Activated CD4-positive, alpha-beta T cell treated with anti-CD3 and anti-CD28 coated beads, Interleukin-2, amount 10 ng/mL, durations not matched to agents 24 days and 14 days (primary cell): ENCODE measurements at regions of chr1 and their contacts with region 1.

Region 1: GRCh38 chr1:246566128-246566812 is at the starts of genes CNST and TFB2M:
- DNase-seq: peak; percentile 98
- H3K4me3 Mint-ChIP-seq: peak within 1 kb of the TSS; percentile 100
- H3K27ac Mint-ChIP-seq: peak within 1 kb of the TSS; percentile 99
- H3K4me1 Mint-ChIP-seq: peaks cover 35% of the 10 kb centered on the region
- H3K27me3 Mint-ChIP-seq: no peaks in the 10 kb centered on the region
- total RNA-seq, gene CNST: 26.4 and 28.5 TPM in 2 replicates
- total RNA-seq, gene TFB2M: 24.3 and 26.5 TPM in 2 replicates

Region 2: GRCh38 chr1:244652699-244653466 is 1913.4 kb before region 1 on chr1 and contains the start of gene DESI2:
- intact Hi-C with region 1: loop called (anchors 2 kb)
- DNase-seq: peak; percentile 99
- H3K4me3 Mint-ChIP-seq: peak within 1 kb of the TSS; percentile 82
- H3K27ac Mint-ChIP-seq: peak within 1 kb of the TSS; percentile 84
- H3K4me1 Mint-ChIP-seq: peaks cover 23% of the 10 kb centered on the region
- H3K27me3 Mint-ChIP-seq: no peaks in the 10 kb centered on the region
- total RNA-seq, gene DESI2: 32.3 and 33.1 TPM in 2 replicates

Region 3: DNA sequence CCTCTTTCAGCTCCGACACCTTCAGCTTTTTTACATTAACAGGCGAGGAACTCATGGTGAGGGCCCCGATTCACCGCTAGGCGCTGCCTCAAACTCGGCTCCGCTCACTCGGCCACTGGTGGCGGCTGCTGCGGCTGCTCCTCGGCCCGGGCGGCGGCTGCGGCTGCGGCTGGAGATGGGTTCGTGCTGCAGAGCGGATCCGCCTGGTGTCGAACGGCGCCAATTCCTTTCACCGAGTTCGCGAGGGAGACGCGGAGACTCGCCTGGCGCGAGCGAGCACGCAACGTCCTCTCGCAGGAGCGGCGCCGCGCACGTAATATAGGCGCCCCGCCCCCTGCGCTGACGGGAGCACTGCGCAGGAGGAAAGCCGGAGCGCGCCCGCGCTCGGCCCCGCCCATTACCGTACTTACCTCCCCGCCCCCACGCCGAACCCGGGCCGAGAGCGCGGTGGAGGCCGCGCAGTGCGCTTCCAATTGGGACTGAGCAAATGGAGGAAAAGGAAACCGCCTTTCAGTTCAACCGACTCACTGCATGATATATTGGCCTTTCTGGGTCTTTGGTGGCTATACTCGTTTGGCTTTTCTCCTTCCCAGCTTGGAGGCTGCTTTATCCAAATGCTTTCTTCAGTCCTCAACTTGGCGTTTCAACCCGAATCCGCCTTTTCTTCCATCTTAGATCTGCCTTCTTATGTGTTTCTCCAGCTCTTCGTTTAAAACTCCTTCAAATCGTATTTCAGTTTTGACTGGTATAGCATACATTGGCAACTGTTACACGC is 1701.8 kb before region 1 on chr1 and contains the start of gene HNRNPU:
- intact Hi-C with region 1: loop called (anchors 2 kb)
- DNase-seq: peak; percentile 99
- H3K4me3 Mint-ChIP-seq: peak within 1 kb of the TSS; percentile 98
- H3K27ac Mint-ChIP-seq: peak within 1 kb of the TSS; percentile 98
- H3K4me1 Mint-ChIP-seq: peaks cover 34% of the 10 kb centered on the region
- H3K27me3 Mint-ChIP-seq: no peaks in the 10 kb centered on the region
- total RNA-seq, gene HNRNPU: 611 and 612 TPM in 2 replicates

Region 4: GRCh38 chr1:246506674-246507481 is 59.4 kb before region 1 on chr1 and contains the start of gene SMYD3:
- intact Hi-C with region 1: loop called (anchors 1 kb)
- DNase-seq: peak; percentile 93
- H3K4me3 Mint-ChIP-seq: peak within 1 kb of the TSS; percentile 93
- H3K27ac Mint-ChIP-seq: peak within 1 kb of the TSS; percentile 88
- H3K4me1 Mint-ChIP-seq: peaks cover 23% of the 10 kb centered on the region
- H3K27me3 Mint-ChIP-seq: no peaks in the 10 kb centered on the region
- total RNA-seq, gene SMYD3: 23.9 and 24.4 TPM in 2 replicates

Region 5: GRCh38 chr1:246602194-246602593 is 35.9 kb after region 1 on chr1:
- intact Hi-C with region 1: loop called (anchors 5 kb)
- DNase-seq: peak; percentile 65
- H3K4me3 Mint-ChIP-seq: no peak overlapping the region
- H3K27ac Mint-ChIP-seq: peak overlapping the region; percentile 9
- H3K4me1 Mint-ChIP-seq: peaks cover 18% of the 10 kb centered on the region
- H3K27me3 Mint-ChIP-seq: no peaks in the 10 kb centered on the region

Region 6: DNA sequence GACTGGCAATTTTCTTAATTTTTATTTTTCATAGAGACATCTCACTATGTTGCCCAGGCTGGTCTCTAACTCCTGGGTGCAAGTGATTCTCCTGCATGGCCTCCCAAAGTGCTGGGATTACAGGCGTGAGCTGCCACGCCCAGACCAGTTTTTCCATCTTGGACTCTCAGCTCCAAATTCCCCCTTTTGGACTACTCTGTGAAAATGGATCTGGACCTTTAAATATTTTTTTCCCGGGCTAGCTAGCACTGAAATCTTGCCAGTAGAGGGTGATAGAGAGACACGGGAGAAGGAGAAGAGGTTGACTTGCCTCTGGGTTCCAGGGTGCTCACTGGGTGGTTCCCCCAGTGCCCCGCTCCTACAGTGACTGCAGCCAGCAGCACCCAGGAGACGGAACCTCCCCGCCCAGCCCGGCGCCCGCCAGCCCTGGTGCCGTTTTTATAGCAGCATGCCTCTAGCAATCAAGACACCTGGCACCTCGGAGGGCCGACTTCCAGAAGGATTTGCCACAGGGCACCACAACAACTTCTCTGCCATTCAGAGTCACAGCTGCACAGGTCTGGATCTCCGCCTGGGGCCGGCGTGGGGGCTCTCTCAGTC is 123.2 kb after region 1 on chr1:
- intact Hi-C with region 1: no loop called
- DNase-seq: peak; percentile 81
- H3K4me3 Mint-ChIP-seq: no peak overlapping the region
- H3K27ac Mint-ChIP-seq: no peak overlapping the region
- H3K4me1 Mint-ChIP-seq: no peaks in the 10 kb centered on the region
- H3K27me3 Mint-ChIP-seq: peaks cover 2% of the 10 kb centered on the region

Region 7: DNA sequence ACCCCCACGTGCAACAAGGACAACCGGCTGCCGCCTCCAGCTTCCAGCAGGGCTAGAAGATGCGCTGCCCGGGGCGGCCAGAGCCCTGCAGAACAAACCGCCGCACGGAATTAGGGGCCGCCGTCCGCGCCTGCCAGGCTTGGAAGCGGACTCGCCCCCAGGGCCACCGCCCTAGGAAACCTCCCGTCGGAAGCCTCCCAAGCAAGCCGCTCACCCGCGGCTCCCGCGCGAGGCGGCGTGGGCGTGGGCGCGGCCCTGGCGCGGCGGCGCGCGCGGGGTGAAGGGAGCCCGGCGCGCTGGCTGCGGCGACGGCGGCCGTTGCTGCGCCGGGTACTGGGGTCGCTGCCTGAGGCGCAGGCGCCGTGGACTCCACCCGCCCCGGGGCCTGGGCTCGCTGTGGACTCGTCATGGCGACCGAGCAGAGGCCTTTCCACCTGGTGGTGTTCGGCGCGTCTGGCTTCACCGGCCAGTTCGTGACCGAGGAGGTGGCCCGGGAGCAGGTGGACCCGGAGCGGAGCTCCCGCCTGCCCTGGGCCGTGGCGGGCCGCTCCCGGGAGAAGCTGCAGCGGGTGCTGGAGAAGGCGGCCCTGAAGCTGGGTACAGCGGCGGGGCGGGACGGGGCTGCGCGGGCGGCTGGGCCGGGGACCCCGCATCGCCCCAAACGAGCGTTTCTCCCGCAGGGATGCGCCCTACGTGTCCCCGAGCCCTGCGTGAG is 157.9 kb after region 1 on chr1 and contains the start of gene SCCPDH:
- intact Hi-C with region 1: loop called (anchors 2 kb)
- DNase-seq: peak; percentile 91
- H3K4me3 Mint-ChIP-seq: peak within 1 kb of the TSS; percentile 91
- H3K27ac Mint-ChIP-seq: peak within 1 kb of the TSS; percentile 84
- H3K4me1 Mint-ChIP-seq: peaks cover 5% of the 10 kb centered on the region
- H3K27me3 Mint-ChIP-seq: no peaks in the 10 kb centered on the region
- total RNA-seq, gene SCCPDH: 31.7 and 32.3 TPM in 2 replicates

Region 8: DNA sequence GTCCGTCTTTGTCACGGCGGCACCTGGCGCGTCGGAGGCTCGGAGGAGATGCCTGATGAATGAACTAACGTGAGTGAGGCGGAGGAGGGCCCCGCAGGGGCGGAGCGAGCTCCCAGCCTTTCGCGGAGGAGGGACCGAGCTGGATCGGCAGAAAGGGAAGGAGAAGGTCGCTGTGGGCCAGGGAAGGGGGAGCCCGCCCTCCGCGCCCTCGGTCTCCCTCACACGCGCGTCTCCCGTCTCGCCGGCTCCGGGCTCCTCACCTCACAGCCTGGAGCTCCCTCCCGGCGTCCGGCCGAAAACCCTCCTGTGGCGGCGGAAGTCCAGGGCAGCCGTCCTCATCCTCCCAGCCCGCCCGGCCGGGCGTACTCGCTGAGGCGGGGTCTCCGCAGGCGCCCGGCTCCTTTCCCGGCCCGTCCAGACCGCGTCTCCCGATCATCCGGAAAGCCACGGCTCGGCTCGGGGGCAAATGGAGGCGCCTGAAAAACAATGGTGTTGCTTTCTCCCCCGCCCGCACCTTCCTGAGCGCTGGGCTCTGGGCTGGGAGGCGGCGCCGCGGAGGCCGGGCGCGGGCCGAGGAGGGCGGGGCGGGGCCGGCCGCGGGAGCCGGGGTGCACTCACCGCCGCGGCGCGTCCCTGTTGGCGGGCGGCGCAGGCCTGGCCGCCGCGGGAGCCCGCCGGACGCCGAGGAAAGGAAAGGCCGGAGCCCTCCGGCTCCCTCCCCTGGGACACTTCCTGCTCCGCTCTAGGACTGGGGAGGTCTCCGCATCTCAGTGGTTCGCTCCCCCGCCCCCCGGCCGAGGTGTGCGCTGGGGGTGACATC is 765.1 kb after region 1 on chr1 and contains the start of gene ZNF496:
- intact Hi-C with region 1: loop called (anchors 5 kb)
- DNase-seq: peak; percentile 92
- H3K4me3 Mint-ChIP-seq: peak within 1 kb of the TSS; percentile 92
- H3K27ac Mint-ChIP-seq: peak within 1 kb of the TSS; percentile 88
- H3K4me1 Mint-ChIP-seq: peaks cover 16% of the 10 kb centered on the region
- H3K27me3 Mint-ChIP-seq: peaks cover 2% of the 10 kb centered on the region
- total RNA-seq, gene ZNF496: 14.2 and 15.7 TPM in 2 replicates